ENCODE measurements at regions of chr5 and their contacts with region 1.

Region 1: GRCh38 chr5:60960591-60960990 is 15.6 kb downstream of the NDUFAF2 start:
- DNase-seq: no peak
- H3K4me3 ChIP-seq: no peak overlapping the region
- CTCF ChIP-seq: peak; percentile 23

Region 2: GRCh38 chr5:60944904-60945812 is 15.4 kb before region 1 on chr5 and contains the starts of genes ERCC8 and NDUFAF2:
- CTCF ChIA-PET with region 1: interaction called, 30 read pairs
- POLR2A ChIA-PET with region 1: interaction called, 6 read pairs
- DNase-seq: peak; percentile 55
- H3K4me3 ChIP-seq: peak within 1 kb of the TSS; percentile 86
- CTCF ChIP-seq: no peak

Region 3: DNA sequence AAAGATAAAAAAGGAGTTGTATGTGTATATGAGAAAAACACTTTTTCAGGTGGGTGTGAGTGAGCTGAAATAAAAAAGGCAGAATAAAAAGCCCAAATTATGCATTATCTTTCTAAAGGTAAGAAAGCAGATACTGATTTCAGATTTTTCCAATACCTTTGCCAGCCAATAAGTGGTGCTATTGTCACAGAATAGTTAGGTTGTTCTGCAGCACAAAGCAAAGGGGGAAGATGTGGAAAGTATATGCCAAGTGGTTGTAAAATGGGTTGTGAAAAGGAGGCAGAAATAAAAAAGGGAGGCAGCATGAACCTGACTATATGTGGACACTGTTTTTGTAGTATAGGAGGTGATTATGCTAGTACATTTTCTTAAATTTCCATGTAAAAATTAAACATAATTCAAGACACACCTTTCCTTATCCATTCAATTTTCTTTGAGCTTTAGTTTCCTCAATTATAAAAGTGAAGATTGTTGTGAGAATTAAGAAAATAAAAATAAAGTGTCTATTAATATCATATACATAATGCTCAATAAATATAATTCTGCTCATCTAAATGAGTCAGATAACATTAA is 94.9 kb after region 1 on chr5:
- CTCF ChIA-PET with region 1: interaction called, 15 read pairs
- POLR2A ChIA-PET with region 1: no interaction called
- DNase-seq: no peak
- H3K4me3 ChIP-seq: no peak overlapping the region
- CTCF ChIP-seq: peak; percentile 60

Region 4: GRCh38 chr5:61089351-61089750 is 128.8 kb after region 1 on chr5:
- CTCF ChIA-PET with region 1: no interaction called
- POLR2A ChIA-PET with region 1: no interaction called
- DNase-seq: no peak
- H3K4me3 ChIP-seq: no peak overlapping the region
- CTCF ChIP-seq: no peak